ENCODE measurements at regions of chr3 and their contacts with region 1.

Region 1: GRCh38 chr3:149969940-149970715 is 567 bp downstream of the PFN2 start:
- DNase-seq: peak; percentile 79
- H3K4me3 Mint-ChIP-seq: peak overlapping the region; percentile 87
- H3K27ac Mint-ChIP-seq: peak overlapping the region; percentile 30
- H3K4me1 Mint-ChIP-seq: peaks cover 11% of the 10 kb centered on the region
- H3K27me3 Mint-ChIP-seq: peaks cover 20% of the 10 kb centered on the region

Region 2: GRCh38 chr3:149512209-149512782 is 457.8 kb before region 1 on chr3:
- CTCF ChIA-PET with region 1: no interaction called
- intact Hi-C with region 1: loop called (anchors 10 kb)
- DNase-seq: peak; percentile 59
- H3K4me3 Mint-ChIP-seq: no peak overlapping the region
- H3K27ac Mint-ChIP-seq: no peak overlapping the region
- H3K4me1 Mint-ChIP-seq: peaks cover 14% of the 10 kb centered on the region
- H3K27me3 Mint-ChIP-seq: peaks cover 15% of the 10 kb centered on the region

Region 3: GRCh38 chr3:149765762-149766334 is 204.3 kb before region 1 on chr3:
- CTCF ChIA-PET with region 1: no interaction called
- intact Hi-C with region 1: loop called (anchors 5 kb)
- DNase-seq: no peak
- H3K4me3 Mint-ChIP-seq: no peak overlapping the region
- H3K27ac Mint-ChIP-seq: no peak overlapping the region
- H3K4me1 Mint-ChIP-seq: no peaks in the 10 kb centered on the region
- H3K27me3 Mint-ChIP-seq: peaks cover 19% of the 10 kb centered on the region

Region 4: DNA sequence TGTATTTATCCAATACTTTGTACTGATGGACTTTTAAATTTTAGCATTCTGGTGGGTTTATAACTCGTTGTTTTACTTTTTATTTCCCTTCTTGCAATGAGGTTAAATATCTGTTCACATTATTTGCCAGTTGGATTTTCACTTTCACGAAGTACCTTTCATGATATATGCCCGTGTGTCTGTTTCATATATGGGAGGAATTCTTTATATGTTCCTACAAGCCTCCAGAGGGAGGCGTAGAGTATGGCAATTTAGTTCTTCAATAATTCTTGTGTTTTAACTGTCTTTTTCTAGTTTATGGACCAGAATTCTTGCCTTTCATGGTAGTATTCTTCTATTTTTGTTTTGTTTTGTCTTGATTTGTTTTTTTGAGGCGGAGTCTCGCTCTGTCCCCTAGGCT is 44.3 kb before region 1 on chr3:
- CTCF ChIA-PET with region 1: no interaction called
- intact Hi-C with region 1: no loop called
- DNase-seq: no peak
- H3K4me3 Mint-ChIP-seq: no peak overlapping the region
- H3K27ac Mint-ChIP-seq: no peak overlapping the region
- H3K4me1 Mint-ChIP-seq: no peaks in the 10 kb centered on the region
- H3K27me3 Mint-ChIP-seq: no peaks in the 10 kb centered on the region

Region 5: GRCh38 chr3:149936812-149937233 is 33.3 kb before region 1 on chr3:
- CTCF ChIA-PET with region 1: interaction called, 5 read pairs
- intact Hi-C with region 1: loop called (anchors 1 kb)
- DNase-seq: peak; percentile 53
- H3K4me3 Mint-ChIP-seq: no peak overlapping the region
- H3K27ac Mint-ChIP-seq: no peak overlapping the region
- H3K4me1 Mint-ChIP-seq: peaks cover 6% of the 10 kb centered on the region
- H3K27me3 Mint-ChIP-seq: no peaks in the 10 kb centered on the region

Region 6: DNA sequence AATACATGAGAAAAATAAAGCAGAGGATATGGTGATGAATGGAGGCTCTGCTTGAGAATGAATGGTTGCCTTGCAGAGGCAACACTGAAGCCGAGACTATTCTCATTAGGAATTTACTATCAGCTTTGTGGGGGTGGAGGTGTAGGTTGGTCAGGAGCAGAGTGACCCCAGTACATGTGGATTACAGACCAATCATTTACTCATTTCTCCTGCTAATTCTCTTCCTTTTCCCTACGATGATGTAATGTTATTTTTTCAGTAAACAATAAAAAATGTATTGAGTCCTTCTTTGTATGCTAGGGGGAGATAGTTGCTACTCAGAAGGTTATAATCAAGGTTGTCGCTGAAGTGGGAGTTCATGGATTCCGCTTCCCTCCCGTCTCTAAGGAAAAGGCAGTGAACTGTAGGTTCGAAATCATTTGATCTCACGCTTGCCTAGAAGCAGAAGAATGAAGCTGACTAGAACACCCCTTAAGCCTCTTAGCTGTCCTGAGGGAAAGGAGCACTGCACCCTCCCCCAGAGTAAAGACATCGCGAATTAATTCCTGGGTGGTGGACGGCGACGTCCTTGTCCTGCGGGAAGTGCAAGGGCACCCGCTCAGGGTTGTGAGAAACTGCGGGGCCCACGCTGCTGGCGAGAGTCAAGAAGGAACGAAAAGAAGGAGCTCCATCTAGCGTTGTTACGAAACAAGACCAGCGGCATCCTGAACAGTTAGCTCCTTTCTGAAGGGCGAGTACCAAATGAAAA is 213.7 kb after region 1 on chr3:
- CTCF ChIA-PET with region 1: interaction called, 63 read pairs
- intact Hi-C with region 1: loop called (anchors 1 kb)
- DNase-seq: peak; percentile 62
- H3K4me3 Mint-ChIP-seq: no peak overlapping the region
- H3K27ac Mint-ChIP-seq: no peak overlapping the region
- H3K4me1 Mint-ChIP-seq: no peaks in the 10 kb centered on the region
- H3K27me3 Mint-ChIP-seq: peaks cover 11% of the 10 kb centered on the region

Region 7: GRCh38 chr3:150495563-150496168 is 525.5 kb after region 1 on chr3:
- CTCF ChIA-PET with region 1: interaction called, 5 read pairs
- intact Hi-C with region 1: loop called (anchors 1 kb)
- DNase-seq: peak; percentile 12
- H3K4me3 Mint-ChIP-seq: no peak overlapping the region
- H3K27ac Mint-ChIP-seq: no peak overlapping the region
- H3K4me1 Mint-ChIP-seq: no peaks in the 10 kb centered on the region
- H3K27me3 Mint-ChIP-seq: no peaks in the 10 kb centered on the region

Measured in activated naive CD4-positive, alpha-beta T cell treated with anti-CD3 and anti-CD28 coated beads for 36 hours (primary cell).